ENCODE measurements at regions of chr3 and their contacts with region 1.

Region 1: DNA sequence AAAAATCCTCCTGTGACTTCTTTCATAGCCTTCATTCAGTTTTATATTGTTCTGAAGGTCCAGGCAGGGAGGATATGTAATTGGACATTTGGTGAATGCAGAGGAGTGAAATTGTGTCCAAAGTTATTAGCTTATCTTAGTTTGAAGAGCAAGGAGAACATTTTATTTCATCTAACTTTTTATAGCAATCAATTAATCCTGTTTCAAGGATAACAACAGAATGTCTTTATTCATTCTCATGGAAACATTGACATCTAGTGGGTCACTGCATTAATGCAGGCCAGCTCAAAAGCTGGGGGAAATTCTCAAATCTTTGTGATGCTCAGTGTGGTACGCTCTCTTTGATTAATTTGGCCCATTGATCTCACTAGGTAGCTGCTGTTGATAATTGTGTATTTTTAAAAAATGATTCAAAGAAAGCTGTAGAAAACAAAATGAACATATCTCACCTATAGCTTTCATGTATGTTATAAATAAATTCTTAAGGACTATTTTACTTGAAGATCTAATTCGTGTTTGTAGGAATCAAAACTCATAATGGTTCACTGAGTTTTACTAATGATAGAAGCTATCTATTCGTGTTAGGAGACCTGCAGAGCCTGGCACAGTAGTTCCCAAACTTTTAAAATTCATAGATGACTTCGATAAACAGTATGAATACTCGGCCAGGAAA is 150.8 kb upstream of the KCNMB2 start:
- DNase-seq: no peak
- ATAC-seq: peak in 3 of 4 donors; percentile 64 to 74 (median 72)
- H3K4me3 ChIP-seq: peak overlapping the region in 6 of 12 donors; percentile 1 to 34 (median 6)
- H3K27ac ChIP-seq: peak overlapping the region in 8 of 12 donors; percentile 20 to 75 (median 56)
- H3K4me1 ChIP-seq: peaks cover 0 to 41% (median 22%) of the 10 kb centered on the region in 12 donors
- H3K27me3 ChIP-seq: no peaks in the 10 kb centered on the region
- CTCF ChIP-seq: peak; percentile 64 to 94 (median 84)
- POLR2A ChIP-seq: no peak

Region 2: GRCh38 chr3:176872771-176873209 is 1512.6 kb before region 1 on chr3:
- intact Hi-C with region 1: loop called in 6 of 10 experiments (anchors 2 to 10 kb)
- DNase-seq: no peak
- ATAC-seq: peak; percentile 36 to 69 (median 64)
- H3K4me3 ChIP-seq: no peak overlapping the region
- H3K27ac ChIP-seq: no peak overlapping the region
- H3K4me1 ChIP-seq: peaks cover 0 to 5% (median 0%) of the 10 kb centered on the region in 12 donors
- H3K27me3 ChIP-seq: no peaks in the 10 kb centered on the region
- CTCF ChIP-seq: peak; percentile 59 to 77 (median 68)
- POLR2A ChIP-seq: no peak

Region 3: DNA sequence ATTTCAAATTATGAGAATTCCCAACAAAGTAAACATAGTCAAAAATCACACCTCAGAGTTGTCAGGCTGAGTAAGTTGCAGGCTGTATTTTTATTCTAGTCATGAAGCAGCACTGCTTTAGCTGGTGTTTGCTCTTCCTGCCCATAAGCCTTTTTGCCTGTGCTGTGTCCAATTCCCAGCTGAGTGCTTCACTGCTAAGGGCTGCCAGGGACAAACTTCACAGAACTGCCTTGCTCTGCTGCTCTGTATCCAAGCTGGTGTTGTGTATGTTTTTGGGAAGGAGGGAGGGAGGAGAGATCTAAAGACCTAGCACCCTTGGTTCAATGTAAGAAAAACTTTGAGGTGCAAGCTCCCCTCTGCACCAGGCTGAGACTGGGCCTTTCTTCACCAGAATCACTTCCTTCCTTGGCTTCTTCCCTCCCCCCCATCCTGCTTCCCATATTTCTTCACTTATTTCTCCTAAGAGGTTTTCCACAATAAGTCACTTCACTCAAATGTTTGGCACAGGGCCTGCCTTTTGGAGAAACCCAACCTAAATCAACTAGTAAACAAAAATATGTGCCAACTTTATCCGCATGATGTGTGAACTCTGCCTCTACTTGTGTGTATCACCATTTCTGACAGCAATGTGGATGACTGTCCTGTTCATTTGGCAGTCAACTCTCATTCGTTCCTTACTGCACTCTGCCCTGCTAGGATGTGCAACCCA is 1344.2 kb before region 1 on chr3:
- intact Hi-C with region 1: loop called in 6 of 10 experiments (anchors 5 to 10 kb)
- DNase-seq: peak in 3 of 5 donors; percentile 37 to 46 (median 38)
- ATAC-seq: peak; percentile 84 to 92 (median 90)
- H3K4me3 ChIP-seq: no peak overlapping the region
- H3K27ac ChIP-seq: peak overlapping the region in 11 of 12 donors; percentile 26 to 73 (median 54)
- H3K4me1 ChIP-seq: peaks cover 0 to 42% (median 29%) of the 10 kb centered on the region in 12 donors
- H3K27me3 ChIP-seq: no peaks in the 10 kb centered on the region
- CTCF ChIP-seq: no peak
- POLR2A ChIP-seq: no peak

Region 4: DNA sequence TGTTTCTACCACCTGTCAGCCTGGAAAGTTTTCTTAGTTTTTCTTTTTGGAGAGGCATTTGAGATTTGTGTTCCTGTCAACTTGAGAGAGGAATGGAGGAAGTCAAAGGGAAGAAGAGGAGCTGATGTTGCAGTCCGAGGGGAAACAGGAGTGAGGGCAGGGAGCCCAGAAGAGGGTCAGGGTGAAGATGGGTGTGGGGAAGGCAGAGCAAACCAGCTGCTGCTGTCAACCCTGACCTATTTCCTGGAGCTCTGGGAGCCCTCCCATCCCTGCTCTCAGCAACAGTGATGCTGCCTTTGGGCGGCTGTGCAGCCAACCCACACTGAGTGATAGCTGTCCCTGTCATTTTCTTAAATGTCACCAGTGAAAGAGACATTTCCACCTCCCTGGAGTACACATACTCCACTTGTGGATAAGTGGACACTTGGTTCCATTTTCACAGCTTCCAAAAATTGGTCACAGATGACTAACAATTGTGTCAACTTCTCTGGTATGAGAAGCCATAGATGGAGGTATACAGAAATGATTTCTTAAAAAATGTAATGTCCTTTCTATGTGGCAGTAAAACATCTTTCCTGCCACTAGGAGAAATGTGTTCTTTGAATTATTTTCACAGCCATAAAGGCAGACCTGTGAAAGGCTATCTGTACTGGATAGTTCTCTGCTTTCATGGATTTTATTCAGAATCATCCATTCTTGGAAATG is 631.8 kb before region 1 on chr3:
- intact Hi-C with region 1: loop called in 1 of 10 experiments (anchors 10 kb)
- DNase-seq: peak; percentile 73 to 86 (median 74)
- ATAC-seq: peak; percentile 88 to 97 (median 96)
- H3K4me3 ChIP-seq: no peak overlapping the region
- H3K27ac ChIP-seq: peak overlapping the region; percentile 28 to 71 (median 43)
- H3K4me1 ChIP-seq: peaks cover 3 to 36% (median 25%) of the 10 kb centered on the region in 12 donors
- H3K27me3 ChIP-seq: no peaks in the 10 kb centered on the region
- CTCF ChIP-seq: no peak
- POLR2A ChIP-seq: no peak

Region 5: DNA sequence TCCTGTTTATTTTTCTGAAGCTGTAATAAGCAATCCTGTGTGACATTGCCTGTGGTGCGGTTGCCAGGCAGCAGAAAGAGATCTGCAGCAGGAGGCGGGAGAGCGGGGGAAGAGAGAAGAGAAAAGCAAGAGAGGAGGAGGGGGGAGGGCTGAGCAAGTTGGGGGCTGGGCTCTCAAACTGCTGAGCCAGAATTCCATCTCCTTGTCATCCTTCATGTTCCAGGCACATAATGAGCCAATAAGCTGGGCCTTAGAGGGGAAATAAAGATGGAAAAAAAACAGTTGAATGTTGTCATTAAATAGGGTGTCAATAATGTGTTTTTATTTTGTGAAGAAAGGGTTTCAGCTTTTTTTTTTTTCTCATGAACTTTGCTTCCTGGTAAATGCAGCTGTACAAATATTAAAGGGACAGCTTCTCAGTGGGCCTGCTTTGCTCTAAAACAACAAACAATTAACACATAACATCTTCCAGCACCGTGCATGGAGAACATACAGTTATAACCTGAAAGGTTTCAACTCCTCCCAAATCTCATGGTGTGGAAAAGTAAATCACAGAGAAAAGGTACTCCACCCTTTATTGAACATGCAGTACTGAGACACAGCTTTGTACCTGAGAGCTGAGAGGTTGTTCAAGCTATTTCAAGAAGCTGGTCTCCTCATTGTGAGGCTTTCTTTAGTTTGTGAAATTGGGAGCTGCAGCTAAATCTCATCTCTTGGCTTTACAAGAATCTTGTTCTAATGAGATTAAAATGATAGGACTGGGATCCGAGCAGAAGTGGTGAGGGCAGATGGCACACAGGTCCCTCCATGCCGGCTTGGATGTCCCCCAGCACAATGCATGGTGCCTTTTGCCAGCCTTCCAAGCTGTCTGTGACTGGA is 300.2 kb before region 1 on chr3:
- intact Hi-C with region 1: loop called in 2 of 10 experiments (anchors 10 kb)
- DNase-seq: peak; percentile 84 to 91 (median 86)
- ATAC-seq: peak; percentile 92 to 98 (median 95)
- H3K4me3 ChIP-seq: no peak overlapping the region
- H3K27ac ChIP-seq: peak overlapping the region in 11 of 12 donors; percentile 39 to 90 (median 77)
- H3K4me1 ChIP-seq: peaks cover 7 to 49% (median 34%) of the 10 kb centered on the region in 12 donors
- H3K27me3 ChIP-seq: no peaks in the 10 kb centered on the region
- CTCF ChIP-seq: no peak
- POLR2A ChIP-seq: no peak

Region 6: DNA sequence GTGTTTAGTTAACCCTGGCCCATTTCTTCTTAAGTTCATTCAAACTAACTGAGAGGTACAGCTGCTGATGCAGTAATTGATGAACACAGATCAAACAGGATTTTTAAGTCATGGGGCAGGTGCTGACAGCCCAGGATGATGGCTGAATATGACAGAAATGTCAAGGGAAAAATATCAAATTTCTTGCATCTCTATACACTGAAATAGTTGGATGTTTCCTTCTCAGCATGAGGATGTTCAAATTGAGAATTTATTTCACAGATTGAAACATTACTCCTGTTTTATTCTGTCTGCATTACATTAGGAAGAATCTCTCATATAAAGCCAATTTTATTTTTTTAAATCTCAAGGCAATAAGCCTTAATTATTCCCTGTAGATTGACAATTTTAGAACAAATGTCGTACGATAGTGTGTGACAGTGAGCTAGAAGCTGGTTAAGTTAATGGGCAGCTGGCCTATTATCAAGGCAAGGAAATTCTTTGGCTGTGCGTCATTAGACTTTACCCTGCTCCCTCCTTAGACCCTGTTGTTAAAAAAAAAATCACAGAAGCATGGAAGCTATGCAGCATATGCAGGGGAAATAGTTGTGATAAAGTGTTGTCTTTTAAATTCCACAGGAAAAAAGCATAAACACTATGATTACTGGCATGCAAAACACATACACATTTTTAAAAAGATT is 33.0 kb before region 1 on chr3:
- intact Hi-C with region 1: no loop called
- DNase-seq: no peak
- ATAC-seq: peak in 2 of 4 donors; percentile 68 to 80
- H3K4me3 ChIP-seq: no peak overlapping the region
- H3K27ac ChIP-seq: no peak overlapping the region
- H3K4me1 ChIP-seq: peaks cover 0 to 24% (median 15%) of the 10 kb centered on the region in 12 donors
- H3K27me3 ChIP-seq: no peaks in the 10 kb centered on the region
- CTCF ChIP-seq: no peak
- POLR2A ChIP-seq: no peak

Measured in heart left ventricle (tissue), 16 donors.